ENCODE measurements at regions of chr17 and their contacts with region 1.

Region 1: GRCh38 chr17:4837471-4838308 is 4.5 kb downstream of the MINK1 start:
- DNase-seq: no peak
- H3K4me3 ChIP-seq: no peak overlapping the region
- H3K27ac ChIP-seq: peak overlapping the region in 1 of 2 experiments; percentile 30; a peak in 1 of 4 replicates
- H3K4me1 ChIP-seq: peaks cover 7 to 30% of the 10 kb centered on the region in 2 experiments; a peak in 3 of 4 replicates
- H3K27me3 ChIP-seq: no peaks in the 10 kb centered on the region
- CTCF ChIP-seq: no peak
- EP300 ChIP-seq: no peak
- RAD21 ChIP-seq: no peak

Region 2: DNA sequence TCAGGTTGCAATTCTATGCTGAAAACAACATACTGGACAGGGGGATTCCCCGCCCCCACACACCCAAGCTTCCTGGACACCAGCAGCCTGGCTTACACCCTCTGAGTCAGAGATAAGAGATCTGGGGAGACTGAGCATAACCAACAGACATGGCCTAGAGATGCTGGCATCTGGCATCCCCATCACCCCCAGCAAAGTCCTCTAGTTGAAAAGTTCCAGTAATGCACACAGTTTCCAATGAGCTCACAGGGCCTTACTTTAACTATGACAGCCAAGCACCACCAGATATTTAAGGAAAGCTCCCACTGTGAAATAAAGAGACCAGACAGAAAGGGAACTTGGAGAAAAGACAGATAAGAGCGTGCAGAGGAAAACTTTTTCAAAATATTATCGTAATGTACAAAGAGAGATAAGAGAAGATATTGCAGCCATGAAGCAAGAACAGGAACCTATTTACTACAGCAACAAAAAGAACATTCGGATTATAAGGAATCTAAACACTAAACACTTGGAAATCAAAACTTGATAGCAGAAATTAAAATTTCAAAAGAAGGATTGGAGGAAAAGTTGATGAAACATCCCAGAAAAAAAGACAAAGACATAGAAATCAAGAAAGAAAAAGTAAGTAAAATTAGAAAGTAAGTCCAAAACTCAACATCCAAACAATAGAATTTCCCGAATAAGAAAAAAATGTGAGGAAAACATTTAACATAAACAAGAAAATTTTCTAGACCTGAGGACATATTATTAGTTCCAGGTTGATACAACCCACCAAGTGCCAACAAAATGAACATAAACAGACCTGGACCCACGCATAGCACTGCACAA is 179.0 kb before region 1 on chr17:
- CTCF ChIA-PET with region 1: no interaction called
- POLR2A ChIA-PET with region 1: no interaction called
- DNase-seq: peak; percentile 58
- H3K4me3 ChIP-seq: no peak overlapping the region
- H3K27ac ChIP-seq: 0 out of 4 replicates have a peak overlapping the region, but pooled peaks of 1 of the 2 experiments have one; percentile 19
- H3K4me1 ChIP-seq: peaks cover 0 to 2% of the 10 kb centered on the region in 2 experiments; a peak in 1 of 4 replicates
- H3K27me3 ChIP-seq: no peaks in the 10 kb centered on the region
- CTCF ChIP-seq: no peak
- EP300 ChIP-seq: peak; percentile 8 to 71; a peak in 3 of 4 replicates
- RAD21 ChIP-seq: no peak

Region 3: GRCh38 chr17:4764595-4764994 is 73.1 kb before region 1 on chr17:
- CTCF ChIA-PET with region 1: no interaction called
- POLR2A ChIA-PET with region 1: no interaction called
- DNase-seq: no peak
- H3K4me3 ChIP-seq: no peak overlapping the region
- H3K27ac ChIP-seq: no peak overlapping the region
- H3K4me1 ChIP-seq: no peaks in the 10 kb centered on the region
- H3K27me3 ChIP-seq: peaks cover 30% of the 10 kb centered on the region; the same call in 1 of the 2 replicates
- CTCF ChIP-seq: no peak
- EP300 ChIP-seq: no peak
- RAD21 ChIP-seq: no peak

Region 4: DNA sequence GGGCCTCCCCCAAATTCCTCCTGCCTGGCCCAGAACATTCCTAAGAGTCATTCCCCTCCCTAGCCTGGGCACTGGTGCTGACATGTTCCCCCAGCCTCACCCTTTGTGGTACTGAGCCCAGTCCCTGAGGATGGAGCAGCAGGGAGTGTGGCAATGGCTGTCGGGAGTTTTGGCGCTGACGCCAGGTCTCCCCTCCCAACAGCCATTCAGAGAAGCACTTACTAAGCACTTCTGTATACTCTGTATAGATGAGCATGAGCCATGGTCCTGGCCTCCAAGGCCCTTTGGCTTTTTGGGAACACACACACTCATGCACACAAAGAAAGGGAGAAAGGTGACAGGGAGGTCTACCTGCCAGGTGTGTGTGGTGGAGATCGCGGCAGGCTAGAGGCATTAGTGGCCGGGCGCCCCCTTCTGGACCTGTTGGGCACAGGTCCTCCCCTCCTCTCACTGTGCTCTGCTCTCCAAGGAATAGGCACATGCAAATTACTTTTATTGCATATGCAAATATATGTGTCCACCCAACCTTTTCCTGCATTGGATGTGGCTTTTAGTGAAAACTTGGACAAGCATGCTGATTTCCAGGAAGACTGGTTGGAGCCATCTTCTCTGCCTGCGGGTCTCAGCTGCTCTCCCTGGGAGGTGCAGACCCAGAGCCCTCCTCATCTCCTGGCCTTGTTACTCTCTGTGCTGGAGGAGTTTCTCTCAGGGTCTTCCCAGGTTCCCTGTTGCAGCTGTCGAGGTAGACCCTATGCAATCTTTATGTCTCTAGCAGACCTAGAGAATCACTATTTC is 44.3 kb after region 1 on chr17:
- CTCF ChIA-PET with region 1: interaction called, 19 read pairs
- POLR2A ChIA-PET with region 1: no interaction called
- DNase-seq: peak; percentile 76
- H3K4me3 ChIP-seq: peak overlapping the region in 1 of 2 experiments; percentile 50; a peak in 1 of 4 replicates
- H3K27ac ChIP-seq: no peak overlapping the region
- H3K4me1 ChIP-seq: no peaks in the 10 kb centered on the region
- H3K27me3 ChIP-seq: no peaks in the 10 kb centered on the region
- CTCF ChIP-seq: peak; percentile 91
- EP300 ChIP-seq: no peak
- RAD21 ChIP-seq: peak; percentile 78